Activated CD4-positive, alpha-beta memory T cell treated with anti-CD3 and anti-CD28 coated beads, Interleukin-2, amount 10 ng/mL, durations not matched to agents 7 days and 5 days (primary cell): ENCODE measurements at regions of chr5 and their contacts with region 1.

Region 1: DNA sequence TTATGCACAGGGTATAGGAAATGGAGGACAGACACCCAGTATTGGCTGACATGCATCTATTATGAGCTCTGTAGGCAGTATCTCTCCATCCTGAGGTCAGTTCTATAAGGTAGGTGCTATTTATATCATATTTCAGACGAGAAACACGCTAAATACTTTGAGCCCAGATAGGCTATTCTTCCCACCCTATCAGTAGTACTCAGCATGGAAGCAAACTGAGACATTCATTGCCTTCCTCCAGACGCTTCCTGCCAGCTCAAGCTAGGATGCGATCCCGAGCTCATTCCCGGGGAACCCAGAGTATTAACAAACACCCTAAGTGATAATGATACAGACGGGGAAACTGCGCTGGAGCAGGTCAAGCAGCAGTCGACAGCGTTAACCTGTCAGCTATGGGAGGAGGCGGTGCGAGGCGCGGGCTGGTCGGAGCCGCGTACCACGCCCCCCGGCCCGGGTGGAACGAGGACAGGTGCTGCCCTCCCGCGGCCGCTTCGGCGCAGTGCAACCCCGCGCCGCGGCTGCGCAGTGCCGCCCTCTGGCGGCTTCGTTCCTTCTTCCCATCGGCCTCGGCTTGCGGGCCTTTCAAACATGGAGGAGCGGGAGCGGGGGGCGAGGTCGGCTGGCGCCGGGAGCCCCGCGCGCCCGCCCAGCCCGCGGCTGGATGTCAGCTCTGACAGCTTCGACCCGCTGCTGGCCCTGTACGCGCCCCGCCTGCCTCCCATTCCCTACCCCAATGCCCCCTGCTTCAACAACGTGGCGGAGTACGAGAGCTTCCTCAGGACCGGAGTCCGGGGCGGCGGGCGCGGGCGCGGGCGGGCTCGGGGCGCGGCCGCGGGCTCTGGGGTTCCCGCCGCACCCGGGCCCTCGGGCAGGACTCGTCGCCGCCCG is at the start of gene LSM11:
- DNase-seq: peak; percentile 93
- H3K4me3 Mint-ChIP-seq: peak within 1 kb of the TSS; percentile 82
- H3K27ac Mint-ChIP-seq: peak within 1 kb of the TSS; percentile 76
- H3K4me1 Mint-ChIP-seq: peaks cover 41% of the 10 kb centered on the region
- H3K27me3 Mint-ChIP-seq: no peaks in the 10 kb centered on the region
- total RNA-seq, gene LSM11: 5.4 to 5.8 TPM

Region 2: GRCh38 chr5:157390551-157391297 is 352.7 kb before region 1 on chr5:
- CTCF ChIA-PET with region 1: interaction called, 17 read pairs
- POLR2A ChIA-PET with region 1: no interaction called
- DNase-seq: peak; percentile 84
- H3K4me3 Mint-ChIP-seq: peak overlapping the region; percentile 46
- H3K27ac Mint-ChIP-seq: peak overlapping the region; percentile 99
- H3K4me1 Mint-ChIP-seq: peaks cover 44% of the 10 kb centered on the region
- H3K27me3 Mint-ChIP-seq: no peaks in the 10 kb centered on the region

Region 3: GRCh38 chr5:157540707-157541446 is 202.5 kb before region 1 on chr5:
- CTCF ChIA-PET with region 1: interaction called, 17 read pairs
- POLR2A ChIA-PET with region 1: interaction called, 3 read pairs
- DNase-seq: peak; percentile 75
- H3K4me3 Mint-ChIP-seq: peak overlapping the region; percentile 67
- H3K27ac Mint-ChIP-seq: peak overlapping the region; percentile 89
- H3K4me1 Mint-ChIP-seq: peaks cover 96% of the 10 kb centered on the region
- H3K27me3 Mint-ChIP-seq: no peaks in the 10 kb centered on the region

Region 4: GRCh38 chr5:157596487-157596886 is 146.9 kb before region 1 on chr5:
- CTCF ChIA-PET with region 1: interaction called, 11 read pairs
- POLR2A ChIA-PET with region 1: no interaction called
- DNase-seq: peak; percentile 72
- H3K4me3 Mint-ChIP-seq: peak overlapping the region; percentile 23
- H3K27ac Mint-ChIP-seq: peak overlapping the region; percentile 87
- H3K4me1 Mint-ChIP-seq: peaks cover 96% of the 10 kb centered on the region
- H3K27me3 Mint-ChIP-seq: no peaks in the 10 kb centered on the region

Region 5: DNA sequence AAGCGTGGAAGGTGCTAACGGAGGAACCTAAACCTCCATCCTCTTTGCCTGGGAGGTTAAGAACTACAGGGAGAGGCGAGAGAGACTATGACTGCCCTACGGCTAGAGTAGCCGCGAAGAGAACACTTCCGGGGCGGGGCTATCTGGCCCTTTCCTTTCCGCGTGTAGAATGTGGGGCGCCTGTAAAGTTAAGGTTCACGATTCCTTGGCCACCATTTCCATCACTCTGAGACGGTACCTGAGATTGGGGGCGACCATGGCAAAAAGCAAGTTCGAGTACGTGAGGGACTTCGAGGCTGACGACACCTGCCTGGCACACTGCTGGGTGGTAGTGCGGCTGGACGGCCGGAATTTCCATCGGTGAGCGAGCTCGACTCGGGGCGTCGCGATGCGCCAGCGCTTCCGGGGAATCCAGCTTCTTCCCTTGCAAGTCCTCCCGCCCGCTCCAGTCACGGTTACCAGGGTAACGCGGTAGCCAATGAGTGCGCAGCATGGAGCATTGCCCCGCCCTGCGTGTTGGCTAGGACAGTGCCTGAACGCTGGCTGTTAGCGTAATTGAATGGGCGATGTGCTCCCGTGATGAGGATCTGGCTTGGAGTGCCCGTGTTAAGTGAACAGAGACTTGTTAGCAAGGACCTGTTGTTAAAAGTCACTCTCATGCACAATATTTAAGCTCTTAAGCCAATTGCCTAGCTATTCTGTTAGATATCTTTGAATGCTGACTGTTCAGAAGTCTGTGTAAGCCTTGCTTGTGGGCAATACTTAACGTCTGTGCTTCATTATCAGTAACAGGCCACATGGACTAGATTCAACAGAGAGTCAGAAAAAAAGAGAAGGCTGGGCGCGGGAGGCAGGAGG is 11.9 kb before region 1 on chr5 and contains the start of gene THG1L:
- CTCF ChIA-PET with region 1: interaction called, 62 read pairs
- POLR2A ChIA-PET with region 1: interaction called, 4 read pairs
- DNase-seq: peak; percentile 98
- H3K4me3 Mint-ChIP-seq: peak within 1 kb of the TSS; percentile 80
- H3K27ac Mint-ChIP-seq: peak within 1 kb of the TSS; percentile 84
- H3K4me1 Mint-ChIP-seq: peaks cover 30% of the 10 kb centered on the region
- H3K27me3 Mint-ChIP-seq: no peaks in the 10 kb centered on the region
- total RNA-seq, gene THG1L: 10.6 to 11.4 TPM

Region 6: DNA sequence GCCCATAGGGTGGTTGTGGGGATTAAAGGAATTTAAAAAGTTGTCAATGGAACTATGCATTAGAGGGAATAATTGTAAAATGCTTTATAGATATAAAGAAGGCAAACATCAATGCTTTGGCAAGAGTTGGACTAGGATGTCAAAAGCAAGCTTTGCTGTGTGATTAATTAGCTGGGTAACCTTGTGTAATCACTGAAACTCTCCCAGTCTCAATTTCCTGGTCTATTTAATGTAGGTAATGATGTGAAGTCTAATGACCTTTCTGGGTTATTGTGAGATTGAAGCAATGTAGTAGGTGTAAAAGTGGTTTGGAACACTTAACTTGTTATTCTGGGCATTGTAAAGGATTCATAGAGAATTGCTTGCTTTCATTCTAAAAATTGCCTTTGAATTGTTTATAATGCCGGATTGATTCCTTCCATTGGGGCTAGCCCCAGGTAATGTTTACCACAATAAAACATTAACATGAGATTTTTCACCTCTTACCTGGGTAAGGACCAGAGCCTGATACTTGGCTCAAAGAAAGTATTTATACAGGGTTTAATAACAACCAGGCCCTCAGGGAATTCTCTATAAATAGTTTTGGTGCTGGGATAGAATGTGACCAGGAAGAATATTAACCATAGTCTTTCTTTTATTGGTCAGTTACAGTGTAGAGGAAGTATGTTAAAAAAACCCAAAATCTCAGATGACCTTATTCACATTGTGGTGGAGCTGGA is 145.6 kb after region 1 on chr5:
- CTCF ChIA-PET with region 1: no interaction called
- POLR2A ChIA-PET with region 1: no interaction called
- DNase-seq: no peak
- H3K4me3 Mint-ChIP-seq: no peak overlapping the region
- H3K27ac Mint-ChIP-seq: no peak overlapping the region
- H3K4me1 Mint-ChIP-seq: peaks cover 13% of the 10 kb centered on the region
- H3K27me3 Mint-ChIP-seq: no peaks in the 10 kb centered on the region

Region 7: GRCh38 chr5:158039911-158040347 is 296.5 kb after region 1 on chr5:
- CTCF ChIA-PET with region 1: no interaction called
- POLR2A ChIA-PET with region 1: no interaction called
- DNase-seq: no peak
- H3K4me3 Mint-ChIP-seq: no peak overlapping the region
- H3K27ac Mint-ChIP-seq: no peak overlapping the region
- H3K4me1 Mint-ChIP-seq: no peaks in the 10 kb centered on the region
- H3K27me3 Mint-ChIP-seq: peaks cover 2% of the 10 kb centered on the region